ENCODE measurements at regions of chr5 and their contacts with region 1.

Region 1: DNA sequence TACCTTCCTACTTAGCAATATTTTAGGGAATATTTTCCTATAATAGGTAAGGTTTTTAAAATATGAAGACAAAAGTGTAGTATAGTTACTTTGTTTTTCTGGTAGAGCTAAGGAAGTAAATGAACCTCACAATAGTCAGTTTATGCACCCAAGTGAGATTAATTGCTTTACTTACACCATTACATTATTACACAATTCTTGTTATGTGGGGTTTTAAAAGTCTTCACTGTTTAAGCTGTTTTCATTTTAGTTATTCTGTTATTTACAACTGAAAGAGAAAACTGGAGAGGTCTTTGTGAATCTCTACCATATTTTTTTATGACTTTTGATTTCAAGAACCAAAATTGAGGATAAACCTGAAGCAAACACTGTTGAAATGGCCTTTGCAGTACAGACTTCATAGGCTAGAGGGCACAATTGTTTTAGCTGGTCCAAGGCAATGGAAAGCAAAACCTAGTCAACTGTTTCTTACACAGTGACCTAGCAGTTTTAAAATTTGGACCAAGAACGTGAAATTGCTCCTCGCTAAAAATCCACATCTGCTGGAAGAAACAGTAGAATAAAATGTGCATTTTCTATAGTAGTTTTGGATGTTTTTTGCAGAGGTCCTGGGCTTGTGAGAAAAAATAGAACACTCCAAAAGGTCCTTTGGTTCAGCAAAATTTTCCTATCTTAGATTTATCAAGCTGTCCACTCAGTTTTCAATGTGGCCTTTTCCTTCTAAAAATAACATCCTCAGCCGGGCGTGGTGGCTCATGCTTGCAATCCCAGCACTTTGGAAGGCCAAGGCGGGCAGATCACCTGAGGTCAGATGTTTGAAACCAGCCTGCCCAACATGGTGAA is 66.4 kb upstream of the FER start:
- DNase-seq: no peak
- ATAC-seq: peak; percentile 74
- H3K4me3 Mint-ChIP-seq: no peak overlapping the region
- H3K27ac Mint-ChIP-seq: no peak overlapping the region
- H3K4me1 Mint-ChIP-seq: peaks cover 44% of the 10 kb centered on the region
- H3K27me3 Mint-ChIP-seq: peaks cover 3% of the 10 kb centered on the region; the same call in 1 of the 2 replicates
- CTCF ChIP-seq: peak; percentile 63

Region 2: GRCh38 chr5:108642167-108642906 is 39.0 kb before region 1 on chr5:
- CTCF ChIA-PET with region 1: interaction called, 11 read pairs
- POLR2A ChIA-PET with region 1: no interaction called
- DNase-seq: peak; percentile 72
- ATAC-seq: peak; percentile 96
- H3K4me3 Mint-ChIP-seq: no peak overlapping the region
- H3K27ac Mint-ChIP-seq: peak overlapping the region; percentile 47
- H3K4me1 Mint-ChIP-seq: peaks cover 17% of the 10 kb centered on the region
- H3K27me3 Mint-ChIP-seq: no peaks in the 10 kb centered on the region
- CTCF ChIP-seq: peak; percentile 70

Measured in WTC11 (cell line).